ENCODE measurements at regions of chr1 and their contacts with region 1.

Region 1: DNA sequence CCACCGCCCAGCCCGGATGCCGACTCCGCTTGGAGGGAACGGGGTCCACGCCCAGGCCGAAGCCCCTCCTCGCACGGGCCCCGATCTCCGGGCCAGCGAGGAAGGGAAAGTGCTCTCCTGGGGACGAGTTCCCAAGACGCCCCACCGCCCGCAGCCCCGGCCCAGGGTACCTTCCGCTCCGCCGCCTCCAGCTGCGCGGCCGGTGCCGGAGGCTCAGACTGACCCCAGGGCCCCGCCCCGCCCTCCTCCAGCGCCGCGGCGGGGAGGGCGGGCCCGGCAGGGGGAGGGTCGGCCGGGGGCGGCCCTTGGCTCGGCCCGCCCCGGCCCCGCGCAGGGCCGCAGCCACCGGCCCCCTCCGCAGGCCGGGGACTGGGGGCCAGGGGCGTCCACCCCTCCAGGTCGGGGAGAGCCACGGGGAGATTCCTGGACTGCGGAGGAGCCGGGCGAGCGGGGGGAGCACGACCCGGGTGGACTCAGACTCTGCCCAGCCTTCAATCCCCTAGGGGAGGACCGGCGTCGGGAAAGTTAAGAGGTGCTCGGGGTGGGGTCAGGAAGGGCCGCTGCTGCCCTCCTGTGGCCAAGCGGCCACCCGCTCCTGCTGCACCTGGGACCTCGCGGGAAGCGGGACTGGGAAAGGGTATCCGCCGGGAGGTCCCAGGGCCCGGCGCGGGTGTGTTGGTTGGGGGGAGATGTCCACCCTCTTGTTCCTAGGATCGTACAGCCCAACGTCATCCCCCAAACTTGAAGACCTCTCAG is at the start of gene RHOC:
- DNase-seq: peak; percentile 69
- H3K4me3 Mint-ChIP-seq: peak within 1 kb of the TSS; percentile 73
- H3K27ac Mint-ChIP-seq: peak within 1 kb of the TSS; percentile 89
- H3K4me1 Mint-ChIP-seq: peaks cover 49% of the 10 kb centered on the region
- H3K27me3 Mint-ChIP-seq: peaks cover 37% of the 10 kb centered on the region
- total RNA-seq, gene RHOC: 87.1 to 92.4 TPM

Region 2: DNA sequence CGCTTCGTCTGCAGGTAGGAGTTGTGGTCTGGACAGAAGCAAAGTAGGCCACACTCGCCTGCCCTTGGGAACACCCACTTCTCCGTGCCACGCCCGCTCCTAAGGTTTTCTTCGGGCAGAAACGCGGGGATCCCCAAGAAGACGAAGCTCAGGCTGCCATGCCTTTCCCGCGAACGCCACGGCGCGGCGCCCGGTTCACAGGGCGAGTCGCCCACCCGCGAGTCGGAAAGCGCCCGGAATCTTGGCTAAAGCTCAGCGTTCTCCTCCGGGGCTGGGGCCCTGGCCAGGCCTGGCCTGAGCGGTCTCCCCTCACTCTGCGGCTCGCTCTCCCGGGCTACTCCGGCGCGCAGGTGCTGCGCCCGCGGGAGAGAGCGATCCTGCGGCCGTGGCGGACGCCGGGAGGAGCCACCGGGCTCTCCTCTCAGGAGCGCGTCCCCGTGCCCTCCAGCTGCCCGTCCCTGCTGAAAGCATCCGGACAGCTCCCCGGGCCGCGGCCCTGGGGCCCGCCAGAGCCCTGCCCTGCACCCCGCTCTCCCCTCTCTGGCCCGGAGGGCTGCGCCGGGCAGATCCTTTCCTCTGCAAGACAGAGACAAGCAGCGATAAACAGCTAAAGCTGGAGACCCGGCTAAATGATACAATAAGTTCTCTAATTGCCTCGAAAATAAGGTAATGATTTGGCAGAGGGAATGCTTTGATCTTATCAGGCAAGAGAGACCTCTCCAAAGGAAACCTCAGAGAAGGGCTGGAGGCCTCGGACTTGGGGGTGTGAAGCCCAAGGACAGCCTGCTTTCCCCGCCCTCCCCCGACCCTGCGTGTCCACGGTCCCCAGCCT is 205.1 kb before region 1 on chr1:
- CTCF ChIA-PET with region 1: interaction called, 18 read pairs
- POLR2A ChIA-PET with region 1: no interaction called
- DNase-seq: peak; percentile 58
- H3K4me3 Mint-ChIP-seq: peak overlapping the region; percentile 40
- H3K27ac Mint-ChIP-seq: no peak overlapping the region
- H3K4me1 Mint-ChIP-seq: peaks cover 7% of the 10 kb centered on the region
- H3K27me3 Mint-ChIP-seq: peaks cover 58% of the 10 kb centered on the region